Left lung (tissue), 14 donors: ENCODE measurements at regions of chr6 and their contacts with region 1.

Region 1: GRCh38 chr6:53171605-53172446 is 23.2 kb upstream of the GCM1 start:
- DNase-seq: peak; percentile 81 to 98 (median 90)
- ATAC-seq: peak; percentile 100
- H3K4me3 ChIP-seq: no peak overlapping the region
- H3K27ac ChIP-seq: no peak overlapping the region
- H3K4me1 ChIP-seq: no peaks in the 10 kb centered on the region
- H3K27me3 ChIP-seq: no peaks in the 10 kb centered on the region
- CTCF ChIP-seq: peak; percentile 100

Region 2: DNA sequence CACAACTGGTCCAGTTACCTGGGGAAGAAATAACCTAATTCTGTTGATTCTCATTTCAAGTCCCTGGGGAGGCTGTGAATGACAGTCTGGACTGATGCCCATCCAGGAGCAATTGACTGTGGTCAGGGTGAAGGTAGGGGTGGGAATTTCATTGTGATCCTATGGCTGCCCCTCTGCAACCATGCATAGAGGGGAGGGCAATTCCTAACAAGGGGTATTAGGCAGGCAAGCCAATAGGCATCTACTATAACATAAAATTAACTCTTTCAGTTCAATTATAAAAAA is 551.0 kb before region 1 on chr6:
- intact Hi-C with region 1: no loop called
- DNase-seq: no peak
- ATAC-seq: no peak
- H3K4me3 ChIP-seq: no peak overlapping the region
- H3K27ac ChIP-seq: no peak overlapping the region
- H3K4me1 ChIP-seq: no peaks in the 10 kb centered on the region
- H3K27me3 ChIP-seq: no peaks in the 10 kb centered on the region
- CTCF ChIP-seq: no peak

Region 3: DNA sequence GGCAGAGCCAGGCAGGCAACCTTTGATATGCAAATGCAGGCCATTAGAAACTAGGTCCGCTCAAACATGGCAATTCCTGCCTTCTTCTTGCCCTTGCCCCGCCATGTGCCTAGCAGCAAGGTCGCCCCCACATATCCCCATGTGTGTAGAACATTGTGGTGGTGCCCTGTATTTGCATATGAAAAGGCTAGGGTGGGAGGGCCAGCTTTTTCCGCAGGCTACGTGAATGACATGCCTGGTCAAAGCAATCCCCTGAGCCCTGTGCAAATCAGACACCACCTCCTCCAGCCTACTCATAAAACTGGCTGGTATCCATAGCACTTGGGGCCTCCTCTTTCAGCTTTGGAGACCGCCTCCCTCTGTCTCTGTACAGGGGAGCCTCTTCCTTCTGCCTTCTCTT is 440.1 kb before region 1 on chr6:
- intact Hi-C with region 1: no loop called
- DNase-seq: no peak
- ATAC-seq: no peak
- H3K4me3 ChIP-seq: no peak overlapping the region
- H3K27ac ChIP-seq: no peak overlapping the region
- H3K4me1 ChIP-seq: no peaks in the 10 kb centered on the region
- H3K27me3 ChIP-seq: no peaks in the 10 kb centered on the region
- CTCF ChIP-seq: no peak

Region 4: GRCh38 chr6:53014063-53014462 is 157.8 kb before region 1 on chr6:
- intact Hi-C with region 1: no loop called
- DNase-seq: peak in 2 of 4 donors; percentile 50 to 76
- ATAC-seq: peak; percentile 85
- H3K4me3 ChIP-seq: no peak overlapping the region
- H3K27ac ChIP-seq: peak overlapping the region; percentile 60 to 71
- H3K4me1 ChIP-seq: peaks cover 0 to 6% of the 10 kb centered on the region in 2 donors
- H3K27me3 ChIP-seq: no peaks in the 10 kb centered on the region
- CTCF ChIP-seq: no peak

Region 5: DNA sequence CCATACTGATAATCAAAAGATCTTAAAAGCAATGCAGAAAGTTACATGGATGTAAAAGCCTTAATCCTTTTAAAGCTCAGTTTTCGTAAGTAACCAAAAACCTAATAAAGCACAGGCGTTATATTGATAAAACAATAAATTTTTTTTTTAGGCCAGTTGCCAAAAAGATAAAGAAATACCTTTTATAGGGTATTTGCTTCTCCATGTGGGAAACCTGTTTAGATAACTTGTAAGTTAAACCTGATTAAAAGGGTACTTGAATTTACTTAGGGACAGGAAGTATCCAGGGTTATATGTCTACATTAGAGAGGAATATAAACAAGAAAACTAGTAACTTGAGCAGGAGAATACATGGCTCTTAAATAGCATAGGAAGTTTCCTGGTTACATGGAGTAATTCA is 85.5 kb before region 1 on chr6:
- intact Hi-C with region 1: no loop called
- DNase-seq: no peak
- ATAC-seq: no peak
- H3K4me3 ChIP-seq: no peak overlapping the region
- H3K27ac ChIP-seq: no peak overlapping the region
- H3K4me1 ChIP-seq: no peaks in the 10 kb centered on the region
- H3K27me3 ChIP-seq: no peaks in the 10 kb centered on the region
- CTCF ChIP-seq: no peak

Region 6: DNA sequence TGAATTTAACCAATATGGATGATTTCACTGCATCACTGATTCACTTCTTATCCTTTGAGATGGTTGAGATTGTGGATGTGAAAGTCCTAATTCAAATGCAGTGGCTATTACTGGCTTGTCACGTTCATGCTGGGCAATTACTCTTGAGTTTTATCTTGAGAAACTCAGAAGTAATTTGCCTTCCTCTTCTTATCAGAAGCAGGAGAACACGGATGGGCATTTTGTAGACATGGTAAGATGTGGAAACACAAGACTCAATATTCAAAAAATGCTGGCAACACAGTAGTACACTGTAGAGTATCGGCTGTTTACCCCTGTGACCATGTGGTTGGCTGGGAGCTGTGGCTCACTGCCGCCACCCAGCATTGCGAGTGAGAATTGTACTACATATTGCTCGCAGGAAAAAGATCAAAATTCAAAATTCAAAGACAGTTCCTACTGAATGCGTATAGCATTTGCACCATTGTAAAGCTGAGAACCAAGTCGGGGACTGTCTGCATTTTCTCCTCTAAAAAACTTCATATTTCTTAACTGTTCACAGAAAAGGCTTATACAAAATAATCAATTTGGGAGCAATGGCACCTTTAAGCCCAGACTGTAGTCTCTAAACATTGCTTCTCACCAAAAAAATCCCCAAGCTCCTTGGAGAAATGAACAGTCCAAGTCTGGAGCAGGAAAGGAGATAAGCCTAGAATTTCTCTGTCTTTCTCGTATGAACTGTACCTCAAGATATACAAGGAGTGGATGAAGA is 238.9 kb after region 1 on chr6:
- intact Hi-C with region 1: loop called in 1 of 2 experiments (anchors 2 kb)
- DNase-seq: peak in 2 of 4 donors; percentile 37 to 74
- ATAC-seq: peak; percentile 97
- H3K4me3 ChIP-seq: no peak overlapping the region
- H3K27ac ChIP-seq: no peak overlapping the region
- H3K4me1 ChIP-seq: no peaks in the 10 kb centered on the region
- H3K27me3 ChIP-seq: no peaks in the 10 kb centered on the region
- CTCF ChIP-seq: peak; percentile 44 to 54

Region 7: DNA sequence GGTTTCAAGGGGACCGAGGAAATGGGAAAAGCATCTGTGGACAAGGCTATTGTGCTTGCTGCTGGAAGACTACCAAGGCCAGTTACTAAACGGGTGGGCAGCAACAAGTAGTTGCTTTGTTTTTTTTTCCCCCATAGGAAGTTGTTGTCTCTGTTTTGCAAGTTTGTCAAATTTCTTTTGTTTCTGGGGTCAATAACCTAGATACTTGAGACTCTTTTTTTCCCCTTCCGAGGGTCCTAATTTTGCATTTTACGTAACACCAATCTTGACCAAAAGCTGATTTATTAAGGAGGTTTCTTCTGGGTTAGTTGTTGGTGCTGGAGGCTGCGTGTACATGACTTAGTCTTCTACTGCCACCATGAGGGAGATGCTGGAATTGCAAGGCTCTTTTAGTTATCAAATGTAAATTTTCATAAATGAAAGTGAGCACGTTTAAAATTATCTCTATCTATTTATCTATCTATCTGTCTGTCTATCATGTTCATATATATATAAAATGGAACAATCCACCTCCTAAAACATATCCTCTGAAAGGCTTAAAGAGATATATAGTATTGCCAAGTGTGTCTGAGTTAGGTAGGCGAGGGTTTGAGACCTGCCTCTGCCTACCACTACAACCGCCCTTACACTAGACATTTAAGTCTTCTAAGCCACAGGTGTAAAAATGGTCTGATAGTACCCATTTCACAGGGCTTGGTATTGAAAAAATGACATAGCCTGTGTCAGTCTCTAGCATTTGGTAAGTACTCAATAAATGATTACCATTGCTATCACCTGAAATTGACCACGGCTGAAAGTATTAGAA is 312.9 kb after region 1 on chr6:
- intact Hi-C with region 1: loop called in 1 of 2 experiments (anchors 5 kb)
- DNase-seq: peak in 2 of 4 donors; percentile 67 to 79
- ATAC-seq: peak; percentile 94
- H3K4me3 ChIP-seq: no peak overlapping the region
- H3K27ac ChIP-seq: no peak overlapping the region
- H3K4me1 ChIP-seq: peaks cover 3 to 17% of the 10 kb centered on the region in 2 donors
- H3K27me3 ChIP-seq: peaks cover 0 to 15% of the 10 kb centered on the region in 2 donors
- CTCF ChIP-seq: peak; percentile 83 to 87